AG04449 (cell line): ENCODE measurements at regions of chr3 and their contacts with region 1.

Region 1: GRCh38 chr3:184561061-184561912 is at the start of gene EPHB3:
- DNase-seq: peak; percentile 91
- H3K4me3 ChIP-seq: peak within 1 kb of the TSS; percentile 72
- CTCF ChIP-seq: peak; percentile 100

Region 2: GRCh38 chr3:184611607-184612281 is 50.5 kb after region 1 on chr3:
- CTCF ChIA-PET with region 1: no interaction called
- POLR2A ChIA-PET with region 1: no interaction called
- DNase-seq: no peak
- H3K4me3 ChIP-seq: no peak overlapping the region
- CTCF ChIP-seq: no peak

Region 3: GRCh38 chr3:184688251-184688881 is 127.1 kb after region 1 on chr3:
- CTCF ChIA-PET with region 1: interaction called, 16 read pairs
- POLR2A ChIA-PET with region 1: no interaction called
- DNase-seq: peak; percentile 59
- H3K4me3 ChIP-seq: no peak overlapping the region
- CTCF ChIP-seq: peak; percentile 3

Region 4: DNA sequence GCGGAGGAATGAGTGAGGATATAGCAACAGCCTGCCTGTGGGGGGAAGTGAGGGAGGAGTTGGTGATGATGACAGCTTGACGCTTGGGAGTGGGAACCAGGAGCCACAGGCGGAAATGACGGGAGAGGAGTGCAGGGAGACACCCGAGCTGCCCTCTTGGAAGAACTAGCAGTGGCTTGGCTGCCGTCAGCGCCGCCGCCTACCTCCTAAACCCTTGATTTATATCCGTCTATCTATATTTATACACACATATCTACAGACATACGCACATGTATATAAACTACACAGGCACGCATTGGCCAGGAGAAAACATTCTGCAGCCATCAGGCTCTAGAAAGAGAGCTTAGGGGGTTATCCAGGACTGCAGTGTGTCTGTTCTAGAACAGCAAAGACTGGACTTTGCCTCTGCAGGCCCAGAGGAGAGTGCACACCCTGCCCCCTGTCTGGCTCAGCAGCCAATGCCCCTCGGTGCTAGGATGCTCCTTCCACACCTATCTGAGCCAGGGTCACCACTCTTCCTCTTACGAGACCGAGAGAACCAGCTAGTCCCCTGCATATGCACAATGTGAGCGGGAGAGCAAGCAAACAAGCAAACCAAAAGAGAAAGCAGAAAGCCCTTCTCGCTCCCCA is 195.8 kb after region 1 on chr3:
- CTCF ChIA-PET with region 1: interaction called, 4 read pairs
- POLR2A ChIA-PET with region 1: interaction called, 12 read pairs
- DNase-seq: peak; percentile 92
- H3K4me3 ChIP-seq: peak overlapping the region; percentile 38
- CTCF ChIP-seq: no peak

Region 5: DNA sequence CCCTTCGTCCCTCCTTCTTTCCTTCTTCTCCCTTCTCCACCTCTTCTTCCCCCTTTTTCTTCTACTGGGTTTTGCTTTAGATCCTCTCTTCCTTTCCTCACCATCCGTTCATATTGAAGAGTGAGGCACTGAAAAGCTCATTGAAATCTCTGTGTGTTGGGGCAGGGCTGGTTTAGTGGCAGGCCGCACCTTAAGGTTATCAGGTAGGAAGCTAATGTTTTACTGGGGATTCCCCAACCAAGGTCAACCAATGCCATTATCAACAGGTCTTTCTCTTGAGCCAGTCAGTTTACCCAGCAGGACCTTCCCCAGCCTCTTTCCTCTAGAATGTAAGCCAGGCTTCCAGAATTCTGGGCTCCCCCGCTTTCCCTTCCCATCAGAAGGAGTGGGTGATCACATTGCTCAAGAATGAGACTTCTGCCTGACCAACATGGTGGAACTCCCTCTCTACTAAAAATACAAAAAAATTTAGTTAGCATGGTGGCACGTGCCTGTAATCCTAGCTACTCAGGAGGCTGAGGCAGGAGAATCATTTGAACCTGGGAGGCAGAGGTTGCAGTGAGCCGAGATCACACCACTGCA is 239.2 kb after region 1 on chr3:
- CTCF ChIA-PET with region 1: interaction called, 15 read pairs
- POLR2A ChIA-PET with region 1: interaction called, 5 read pairs
- DNase-seq: no peak
- H3K4me3 ChIP-seq: no peak overlapping the region
- CTCF ChIP-seq: no peak

Region 6: GRCh38 chr3:184822654-184823053 is 261.4 kb after region 1 on chr3:
- CTCF ChIA-PET with region 1: interaction called, 12 read pairs
- POLR2A ChIA-PET with region 1: no interaction called
- DNase-seq: no peak
- H3K4me3 ChIP-seq: no peak overlapping the region
- CTCF ChIP-seq: no peak